ENCODE measurements at regions of chr3 and their contacts with region 1.

Region 1: DNA sequence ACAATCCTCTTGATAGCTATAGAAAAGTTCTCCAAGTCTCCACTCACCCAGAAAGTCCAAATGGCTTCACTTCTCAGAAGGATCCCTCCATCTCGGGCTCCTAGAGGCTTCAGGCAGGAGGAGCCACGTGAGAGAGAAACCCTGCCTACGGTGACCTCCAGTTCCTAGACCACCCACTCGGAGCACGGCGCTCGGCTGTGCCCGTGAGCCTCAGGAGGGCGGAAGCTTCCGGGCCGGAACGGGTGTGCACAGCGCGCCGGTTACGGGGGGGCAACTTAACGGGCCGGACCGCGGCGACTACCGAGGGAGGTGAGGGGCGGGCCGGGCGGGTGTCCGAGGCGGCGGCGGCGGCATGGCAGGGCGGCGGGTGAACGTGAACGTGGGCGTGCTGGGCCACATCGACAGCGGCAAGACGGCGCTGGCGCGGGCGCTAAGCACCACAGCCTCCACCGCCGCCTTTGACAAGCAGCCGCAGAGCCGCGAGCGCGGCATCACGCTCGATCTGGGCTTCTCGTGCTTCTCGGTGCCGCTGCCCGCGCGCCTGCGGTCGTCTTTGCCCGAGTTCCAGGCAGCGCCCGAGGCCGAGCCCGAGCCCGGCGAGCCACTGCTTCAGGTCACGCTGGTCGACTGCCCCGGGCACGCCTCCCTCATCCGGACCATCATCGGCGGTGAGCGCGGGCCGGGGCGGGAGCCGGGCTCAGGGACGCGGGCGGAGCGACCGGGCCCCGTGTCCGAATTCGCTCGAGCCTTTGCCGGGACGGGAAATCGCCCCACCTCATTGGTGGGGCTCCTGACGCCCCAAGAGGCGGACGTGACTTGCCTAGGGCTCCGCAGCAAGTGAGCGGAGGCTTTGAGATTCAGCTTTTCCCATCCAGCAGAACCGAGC is at the start of gene EEFSEC:
- DNase-seq: peak; percentile 75 to 93 (median 82)
- ATAC-seq: peak; percentile 95
- H3K4me3 ChIP-seq: peak within 1 kb of the TSS; percentile 79
- H3K4me3 Mint-ChIP-seq: peak within 1 kb of the TSS; percentile 84 to 98 (median 94)
- H3K27ac ChIP-seq: peak within 1 kb of the TSS; percentile 77
- H3K27ac Mint-ChIP-seq: peak within 1 kb of the TSS; percentile 85 to 98 (median 95)
- H3K4me1 ChIP-seq: peaks cover 13% of the 10 kb centered on the region in 2 donors
- H3K4me1 Mint-ChIP-seq: peaks cover 16 to 59% (median 47%) of the 10 kb centered on the region in 7 donors
- H3K27me3 ChIP-seq: no peaks in the 10 kb centered on the region
- H3K27me3 Mint-ChIP-seq: no peaks in the 10 kb centered on the region
- total RNA-seq, gene EEFSEC: 17.3 to 18.5 (median 17.9) TPM

Region 2: DNA sequence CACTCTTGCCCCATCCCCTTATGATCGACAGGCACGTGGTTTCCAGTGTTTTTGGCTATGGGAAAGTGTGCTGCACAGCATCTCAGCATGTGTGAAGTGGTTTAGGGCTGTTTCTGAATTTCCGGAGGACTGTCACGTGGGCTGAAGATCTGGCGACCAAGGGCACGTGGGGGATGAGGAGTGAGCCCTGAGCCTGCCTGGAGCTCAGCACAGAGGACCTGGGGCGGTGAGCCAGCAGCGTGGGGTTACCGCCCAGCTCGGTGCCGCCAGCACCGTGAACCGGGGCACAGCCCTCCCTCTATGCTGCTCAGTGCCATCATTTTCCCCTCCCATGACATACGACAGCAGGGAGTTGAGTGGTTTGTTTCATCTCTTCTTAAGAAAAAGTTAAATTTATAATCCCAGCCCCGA is 163.1 kb after region 1 on chr3:
- CTCF ChIA-PET with region 1: interaction called, 3 read pairs
- POLR2A ChIA-PET with region 1: interaction called, 3 read pairs
- intact Hi-C with region 1: loop called (anchors 1 to 10 kb)
- DNase-seq: peak; percentile 35 to 91 (median 86)
- ATAC-seq: peak; percentile 97
- H3K4me3 ChIP-seq: no peak overlapping the region
- H3K4me3 Mint-ChIP-seq: peak overlapping the region; percentile 23 to 78 (median 56)
- H3K27ac ChIP-seq: peak overlapping the region; percentile 78
- H3K27ac Mint-ChIP-seq: peak overlapping the region; percentile 71 to 97 (median 88)
- H3K4me1 ChIP-seq: peaks cover 9 to 91% of the 10 kb centered on the region in 2 donors
- H3K4me1 Mint-ChIP-seq: peaks cover 16 to 97% (median 84%) of the 10 kb centered on the region in 7 donors
- H3K27me3 ChIP-seq: no peaks in the 10 kb centered on the region
- H3K27me3 Mint-ChIP-seq: no peaks in the 10 kb centered on the region

Measured in naive thymus-derived CD4-positive, alpha-beta T cell (primary cell).